HEK293 (cell line): ENCODE measurements at regions of chr19 and their contacts with region 1.

Region 1: GRCh38 chr19:49546825-49547565 is 19.2 kb downstream of the RCN3 start:
- H3K4me3 ChIP-seq: no peak overlapping the region
- H3K27ac ChIP-seq: peak overlapping the region; percentile 54
- H3K4me1 ChIP-seq: peaks cover 9% of the 10 kb centered on the region
- CTCF ChIP-seq: peak; percentile 68

Region 2: DNA sequence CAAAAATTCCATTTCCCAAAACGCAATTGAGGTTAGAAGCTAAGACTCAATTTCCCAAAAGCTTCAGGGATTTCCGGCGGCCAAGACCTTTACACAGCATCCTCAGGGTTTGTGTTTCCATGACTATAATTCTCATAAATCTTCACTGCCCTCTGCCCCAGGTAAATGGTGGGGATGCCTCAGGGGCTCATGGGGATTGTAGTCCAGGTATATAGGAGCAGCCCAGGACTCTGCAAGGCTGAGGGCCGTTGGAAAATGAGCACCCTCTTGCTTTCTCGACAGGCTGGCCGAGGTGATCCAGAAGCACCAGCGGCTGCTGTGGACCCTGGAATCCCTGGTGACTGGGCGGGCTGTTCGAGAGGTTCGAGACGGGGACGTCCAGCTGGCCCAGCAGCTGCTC is 87.6 kb before region 1 on chr19:
- CTCF ChIA-PET with region 1: no interaction called
- POLR2A ChIA-PET with region 1: no interaction called
- H3K4me3 ChIP-seq: no peak overlapping the region
- H3K27ac ChIP-seq: 0 out of 2 replicates have a peak overlapping the region, but pooled peaks have one; percentile 17
- H3K4me1 ChIP-seq: no peaks in the 10 kb centered on the region
- CTCF ChIP-seq: no peak

Region 3: DNA sequence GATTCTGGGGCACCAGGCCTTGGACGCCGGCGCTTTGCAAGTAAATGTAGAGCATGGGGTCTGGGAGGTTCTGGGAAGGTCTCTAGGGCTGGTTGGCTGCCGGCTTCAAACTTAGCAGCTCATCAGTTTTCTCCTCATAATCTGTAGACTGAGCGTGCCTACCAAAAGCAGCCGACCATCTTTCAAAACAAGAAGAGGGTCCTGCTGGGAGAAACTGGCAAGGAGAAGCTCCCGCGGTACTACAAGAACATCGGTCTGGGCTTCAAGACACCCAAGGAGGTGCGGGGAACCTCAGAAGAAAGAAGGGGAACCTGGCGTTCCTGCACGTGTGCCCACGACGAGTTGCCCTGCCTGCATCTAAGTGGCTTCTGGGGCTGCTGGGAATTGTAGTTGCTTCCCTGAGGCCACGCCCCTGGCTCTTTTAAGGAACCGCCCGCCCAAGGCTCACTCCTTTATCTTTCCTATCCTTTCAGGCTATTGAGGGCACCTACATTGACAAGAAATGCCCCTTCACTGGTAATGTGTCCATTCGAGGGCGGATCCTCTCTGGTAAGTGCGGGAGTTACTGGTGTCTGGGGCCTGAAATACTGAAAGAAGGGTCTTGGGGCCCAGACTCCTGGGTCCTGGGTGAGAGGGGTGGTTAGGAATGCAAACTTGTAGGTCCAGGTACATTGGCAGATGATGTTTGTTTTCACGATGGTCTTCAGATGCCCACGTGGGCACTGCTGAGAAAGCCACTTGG is 49.8 kb before region 1 on chr19:
- CTCF ChIA-PET with region 1: interaction called, 299 read pairs
- POLR2A ChIA-PET with region 1: interaction called, 18 read pairs
- H3K4me3 ChIP-seq: peak overlapping the region; percentile 89
- H3K27ac ChIP-seq: peak overlapping the region; percentile 87
- H3K4me1 ChIP-seq: peaks cover 7% of the 10 kb centered on the region
- CTCF ChIP-seq: no peak

Region 4: DNA sequence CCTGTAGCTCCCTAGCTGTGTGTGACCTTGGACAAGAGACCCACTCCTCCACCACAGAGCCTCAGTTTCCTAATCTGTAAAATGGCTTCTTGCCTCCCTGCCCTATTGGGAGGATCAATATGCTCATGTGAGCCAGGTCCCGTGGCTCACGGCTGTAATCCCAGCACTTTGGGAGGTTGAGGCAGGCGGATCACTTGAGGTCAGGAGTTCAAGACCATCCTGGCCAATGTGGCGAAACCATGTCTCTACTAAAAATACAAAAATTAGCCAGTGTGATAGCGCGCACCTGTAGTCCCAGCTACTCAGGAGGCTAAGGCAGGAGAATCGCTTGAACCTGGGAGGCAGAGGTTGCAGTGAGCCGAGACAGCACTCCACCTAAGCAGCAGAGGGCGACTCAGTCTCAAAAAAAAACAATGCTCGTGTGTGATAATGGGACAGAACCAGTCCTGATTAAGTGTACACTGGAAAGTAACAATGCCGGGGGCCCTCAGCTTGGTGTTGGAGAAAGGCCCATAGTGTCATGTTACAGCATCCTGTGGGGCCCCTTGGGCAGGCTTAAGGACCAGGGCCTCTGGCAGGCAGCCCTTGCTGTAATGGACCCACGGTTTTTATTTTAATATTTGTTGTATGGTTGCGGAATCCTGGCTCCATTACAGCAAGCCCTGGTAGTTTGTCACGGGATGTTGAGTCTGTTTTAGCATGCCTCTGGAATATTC is 44.0 kb before region 1 on chr19:
- CTCF ChIA-PET with region 1: interaction called, 299 read pairs
- POLR2A ChIA-PET with region 1: interaction called, 10 read pairs
- H3K4me3 ChIP-seq: no peak overlapping the region
- H3K27ac ChIP-seq: no peak overlapping the region; the same call in 1 of the 2 replicates
- H3K4me1 ChIP-seq: no peaks in the 10 kb centered on the region; the same call in 1 of the 2 replicates
- CTCF ChIP-seq: peak; percentile 89

Region 5: GRCh38 chr19:49512970-49513745 is 33.8 kb before region 1 on chr19:
- CTCF ChIA-PET with region 1: interaction called, 299 read pairs
- POLR2A ChIA-PET with region 1: interaction called, 9 read pairs
- H3K4me3 ChIP-seq: peak overlapping the region; percentile 82
- H3K27ac ChIP-seq: peak overlapping the region; percentile 88
- H3K4me1 ChIP-seq: peaks cover 8% of the 10 kb centered on the region
- CTCF ChIP-seq: no peak

Region 6: DNA sequence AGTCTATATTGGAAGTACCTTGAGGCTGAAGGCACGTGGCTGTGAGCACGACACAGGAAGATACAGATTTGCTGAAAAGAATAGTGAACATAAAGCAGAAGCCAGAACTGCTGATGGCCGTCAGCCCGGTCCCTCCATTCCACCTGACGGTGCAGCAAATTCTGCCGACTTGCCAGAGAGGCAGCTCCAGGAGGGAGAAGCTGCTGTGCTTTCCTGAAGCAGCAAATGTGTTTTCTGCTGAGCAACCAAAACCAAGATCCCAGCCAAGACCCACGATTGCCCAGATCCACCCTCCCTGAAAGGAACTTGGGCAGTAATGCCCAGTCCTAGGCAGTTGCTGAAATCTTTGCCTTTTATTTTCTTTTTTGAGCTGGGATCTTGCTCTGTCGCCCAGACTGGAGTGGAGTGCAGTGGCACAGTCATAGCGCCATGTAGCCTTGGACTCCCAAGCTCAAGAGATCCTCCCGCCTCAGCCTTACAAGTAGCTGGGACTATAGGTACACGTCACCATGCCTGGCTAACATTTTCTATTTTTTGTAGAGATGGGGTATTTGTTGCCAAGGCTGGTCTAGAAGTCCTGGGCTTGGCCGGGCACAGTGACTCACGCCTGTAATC is 26.2 kb before region 1 on chr19:
- CTCF ChIA-PET with region 1: interaction called, 16 read pairs
- POLR2A ChIA-PET with region 1: no interaction called
- H3K4me3 ChIP-seq: no peak overlapping the region
- H3K27ac ChIP-seq: no peak overlapping the region
- H3K4me1 ChIP-seq: no peaks in the 10 kb centered on the region
- CTCF ChIP-seq: no peak

Region 7: GRCh38 chr19:49533551-49534488 is 13.2 kb before region 1 on chr19:
- CTCF ChIA-PET with region 1: interaction called, 23 read pairs
- POLR2A ChIA-PET with region 1: interaction called, 4 read pairs
- H3K4me3 ChIP-seq: peak overlapping the region; percentile 56
- H3K27ac ChIP-seq: no peak overlapping the region
- H3K4me1 ChIP-seq: no peaks in the 10 kb centered on the region
- CTCF ChIP-seq: no peak